Heart left ventricle (tissue), 16 donors: ENCODE measurements at regions of chr6 and their contacts with region 1.

Region 1: DNA sequence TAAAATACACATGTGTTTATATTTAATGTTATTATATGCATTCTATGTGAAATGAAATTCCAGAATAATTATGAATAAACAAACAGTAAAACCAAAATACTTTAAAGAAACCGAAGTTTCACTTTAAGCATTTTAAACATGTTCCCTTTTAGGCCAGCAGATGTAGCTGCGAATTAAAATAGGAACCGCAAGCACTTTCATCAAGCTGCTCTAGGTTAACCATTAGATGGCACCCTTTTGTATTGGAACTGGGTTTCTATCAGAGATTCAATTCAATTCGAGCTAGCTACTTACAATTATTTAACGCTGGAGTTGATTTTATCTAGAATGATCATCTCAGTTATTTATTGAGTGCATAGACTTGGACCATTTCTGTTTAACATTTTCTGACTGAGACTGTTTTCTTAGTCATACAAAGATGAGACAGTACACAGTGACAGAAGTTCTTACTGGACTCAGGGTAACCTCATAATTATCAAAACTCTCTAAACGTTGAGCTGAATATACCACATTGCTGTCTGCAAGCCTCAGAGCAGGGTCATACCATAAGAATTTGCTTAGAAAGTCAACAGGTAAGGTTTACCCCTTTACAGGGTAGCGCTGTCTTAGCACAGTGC is 8.5 kb downstream of the TMEM242 start:
- DNase-seq: no peak
- ATAC-seq: peak; percentile 50 to 77 (median 72)
- H3K4me3 ChIP-seq: no peak overlapping the region
- H3K27ac ChIP-seq: peak overlapping the region in 2 of 12 donors; percentile 6 to 27
- H3K4me1 ChIP-seq: peaks cover 0 to 31% (median 9%) of the 10 kb centered on the region in 12 donors
- H3K27me3 ChIP-seq: no peaks in the 10 kb centered on the region
- CTCF ChIP-seq: peak; percentile 69 to 92 (median 86)
- POLR2A ChIP-seq: no peak

Region 2: DNA sequence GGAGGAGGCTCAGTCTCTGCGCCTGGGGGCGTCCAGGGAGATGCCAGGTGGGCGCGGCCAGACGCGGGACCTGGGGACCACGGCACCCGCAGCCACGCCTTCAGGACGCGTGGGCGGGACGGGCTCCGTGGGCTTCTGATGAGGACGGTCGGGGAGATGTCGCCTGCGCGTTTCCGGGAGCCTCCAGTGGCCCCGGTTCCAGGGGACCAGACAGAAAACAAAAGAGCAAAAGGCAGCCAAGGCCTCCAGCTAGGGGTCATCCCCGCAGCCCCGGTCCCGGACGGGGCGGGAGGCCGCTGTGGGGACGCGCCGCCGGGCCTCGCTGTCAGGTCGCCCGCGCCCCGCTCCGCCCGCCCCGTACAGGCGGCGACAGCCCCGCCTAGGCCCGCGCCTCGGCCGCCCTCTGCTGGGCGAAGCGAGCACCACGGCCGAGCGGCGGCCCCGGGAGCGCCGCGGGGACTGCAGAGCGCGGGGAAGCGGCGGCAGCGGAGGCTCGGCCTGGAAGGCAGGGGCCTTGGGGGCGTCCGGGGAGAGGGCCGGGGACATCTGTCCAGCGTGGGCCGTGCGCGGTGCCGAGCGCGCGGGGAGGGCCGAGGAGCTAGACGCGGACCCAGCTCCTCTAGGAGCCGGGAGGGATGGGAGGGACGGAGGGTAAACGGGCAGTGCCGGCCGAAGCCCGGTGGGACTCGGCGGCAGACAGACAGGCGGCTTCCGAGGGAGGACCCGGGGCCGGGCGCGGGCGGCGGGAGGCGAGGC is 40.2 kb before region 1 on chr6:
- intact Hi-C with region 1: no loop called
- DNase-seq: peak; percentile 77 to 91 (median 82)
- ATAC-seq: peak; percentile 74 to 98 (median 94)
- H3K4me3 ChIP-seq: peak overlapping the region; percentile 28 to 80 (median 64)
- H3K27ac ChIP-seq: peak overlapping the region; percentile 51 to 90 (median 81)
- H3K4me1 ChIP-seq: peaks cover 0 to 28% (median 15%) of the 10 kb centered on the region in 12 donors
- H3K27me3 ChIP-seq: no peaks in the 10 kb centered on the region
- CTCF ChIP-seq: peak; percentile 27 to 98 (median 88)
- POLR2A ChIP-seq: peak in 1 of 2 donors; percentile 40

Region 3: DNA sequence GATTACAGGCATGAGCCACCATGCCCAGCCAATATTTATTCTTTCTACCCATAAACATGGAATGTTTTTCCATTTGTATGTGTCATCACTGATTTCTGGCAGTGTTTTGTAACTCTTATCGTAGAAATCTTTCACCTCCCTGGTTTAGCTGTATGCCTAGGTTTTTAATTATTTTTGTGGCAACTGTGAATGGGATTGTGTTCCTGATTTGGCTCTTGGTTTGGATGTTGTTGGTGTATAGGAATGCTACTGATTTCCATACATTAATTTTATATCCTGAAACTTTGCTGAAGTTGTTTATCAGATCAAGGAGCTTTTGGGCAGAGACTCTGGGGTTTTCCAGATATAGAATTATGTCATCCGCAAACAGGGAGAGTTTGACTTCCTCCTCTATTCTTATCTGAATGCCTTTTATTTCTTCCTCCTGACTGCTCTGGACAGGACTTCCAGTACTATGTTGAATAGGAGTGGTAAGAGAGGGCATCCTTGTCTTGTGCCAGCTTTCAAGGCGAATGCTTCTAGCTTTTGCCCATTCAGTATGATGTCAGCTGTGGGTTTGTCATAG is 264.7 kb after region 1 on chr6:
- intact Hi-C with region 1: loop called in 1 of 10 experiments (anchors 5 kb)
- DNase-seq: no peak
- ATAC-seq: peak in 3 of 4 donors; percentile 72 to 75 (median 74)
- H3K4me3 ChIP-seq: no peak overlapping the region
- H3K27ac ChIP-seq: peak overlapping the region in 2 of 12 donors; percentile 22 to 52
- H3K4me1 ChIP-seq: peaks cover 0 to 18% (median 8%) of the 10 kb centered on the region in 12 donors
- H3K27me3 ChIP-seq: no peaks in the 10 kb centered on the region
- CTCF ChIP-seq: no peak
- POLR2A ChIP-seq: no peak

Region 4: DNA sequence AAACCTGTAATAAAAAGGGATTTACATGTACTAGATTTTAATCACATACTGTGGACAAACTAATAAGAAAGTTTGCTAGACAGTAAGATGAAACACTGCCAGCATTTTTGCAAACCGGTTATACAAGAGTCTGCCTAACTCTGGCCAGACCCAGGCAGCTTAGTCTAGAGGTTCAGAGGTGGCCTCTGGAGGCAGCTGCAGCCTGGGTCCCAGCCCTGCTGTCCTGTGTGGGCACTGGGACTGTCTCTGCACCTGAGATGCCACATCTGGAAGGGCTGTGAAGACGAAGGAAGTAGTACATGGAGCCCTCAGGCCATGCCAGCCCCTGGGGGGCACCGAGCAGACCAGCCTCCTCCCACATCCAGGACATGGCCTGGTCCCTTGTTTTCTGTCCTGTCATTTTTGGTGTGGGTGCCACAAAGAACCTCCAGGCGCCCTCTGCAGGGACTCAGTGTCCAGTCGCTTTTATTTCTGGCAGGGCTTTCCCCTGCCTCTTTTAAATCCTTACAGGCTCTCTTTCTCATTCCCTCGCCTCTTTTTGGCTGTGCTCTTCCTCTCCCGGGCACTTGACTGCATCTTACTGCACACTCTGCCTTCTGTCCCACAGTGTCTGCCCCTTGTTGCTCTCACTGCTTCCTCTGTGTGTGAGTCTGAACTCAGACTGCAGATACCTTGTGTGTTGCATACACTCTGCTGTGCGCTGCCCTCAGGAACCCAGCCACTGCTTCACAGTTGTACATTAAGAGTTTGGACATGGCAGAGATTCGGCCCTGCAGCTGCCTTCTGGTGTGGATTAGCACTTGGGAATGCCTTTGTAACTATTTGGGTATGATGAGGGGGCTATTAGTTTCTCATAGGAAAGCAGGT is 282.9 kb after region 1 on chr6:
- intact Hi-C with region 1: loop called (anchors 2 to 10 kb)
- DNase-seq: peak in 2 of 5 donors; percentile 44 to 51
- ATAC-seq: peak; percentile 32 to 72 (median 65)
- H3K4me3 ChIP-seq: no peak overlapping the region
- H3K27ac ChIP-seq: peak overlapping the region in 1 of 12 donors; percentile 33
- H3K4me1 ChIP-seq: peaks cover 0 to 10% (median 2%) of the 10 kb centered on the region in 12 donors
- H3K27me3 ChIP-seq: no peaks in the 10 kb centered on the region
- CTCF ChIP-seq: peak; percentile 24 to 67 (median 52)
- POLR2A ChIP-seq: no peak

Region 5: GRCh38 chr6:157946865-157947532 is 632.2 kb after region 1 on chr6:
- intact Hi-C with region 1: loop called in 1 of 10 experiments (anchors 10 kb)
- DNase-seq: no peak
- ATAC-seq: peak in 3 of 4 donors; percentile 62 to 65 (median 64)
- H3K4me3 ChIP-seq: no peak overlapping the region
- H3K27ac ChIP-seq: no peak overlapping the region
- H3K4me1 ChIP-seq: peaks cover 0 to 3% (median 0%) of the 10 kb centered on the region in 12 donors
- H3K27me3 ChIP-seq: no peaks in the 10 kb centered on the region
- CTCF ChIP-seq: peak in 9 of 12 donors; percentile 32 to 61 (median 44)
- POLR2A ChIP-seq: no peak

Region 6: GRCh38 chr6:158060455-158061360 is 745.9 kb after region 1 on chr6:
- intact Hi-C with region 1: loop called in 1 of 10 experiments (anchors 10 kb)
- DNase-seq: peak; percentile 78 to 91 (median 88)
- ATAC-seq: peak; percentile 73 to 87 (median 84)
- H3K4me3 ChIP-seq: peak overlapping the region in 4 of 12 donors; percentile 2 to 27 (median 8)
- H3K27ac ChIP-seq: peak overlapping the region; percentile 14 to 94 (median 79)
- H3K4me1 ChIP-seq: peaks cover 12 to 51% (median 24%) of the 10 kb centered on the region in 12 donors
- H3K27me3 ChIP-seq: no peaks in the 10 kb centered on the region
- CTCF ChIP-seq: no peak
- POLR2A ChIP-seq: no peak